ENCODE measurements at regions of chr2 and their contacts with region 1.

Region 1: DNA sequence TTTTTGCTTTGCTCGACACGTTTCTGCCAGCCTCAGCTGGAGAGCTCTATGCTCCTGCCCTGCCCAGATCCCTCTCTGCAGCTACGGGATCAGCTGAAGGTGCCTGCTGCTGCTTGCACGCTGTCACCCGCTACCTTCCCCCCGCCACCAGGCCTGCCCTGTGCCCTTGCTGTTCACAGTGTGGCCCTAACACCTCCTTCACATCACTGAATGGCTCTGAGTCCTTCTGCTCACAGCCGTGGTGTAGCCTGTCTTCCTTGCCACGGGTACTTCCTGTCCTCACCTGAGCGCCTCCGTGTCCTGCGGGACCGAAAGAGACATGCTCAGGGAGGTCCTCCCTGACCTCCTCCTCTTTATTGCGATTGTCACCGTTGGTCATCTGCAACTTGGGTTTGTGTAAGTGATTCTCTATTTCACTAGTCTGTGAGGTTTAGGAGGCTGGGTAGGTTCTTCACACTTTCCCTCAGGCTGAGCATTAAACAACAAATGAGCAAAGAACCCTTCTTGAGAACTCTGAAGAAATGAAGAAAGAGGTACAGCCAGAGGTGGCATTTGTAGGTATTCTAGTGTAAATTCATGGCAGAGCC is 127.5 kb downstream of the NCK2 start:
- DNase-seq: no peak
- ATAC-seq: no peak; the same call in 2 of the 3 replicates
- H3K4me3 ChIP-seq: no peak overlapping the region
- H3K27ac ChIP-seq: no peak overlapping the region
- H3K4me1 ChIP-seq: peaks cover 28% of the 10 kb centered on the region
- H3K27me3 ChIP-seq: no peaks in the 10 kb centered on the region
- CTCF ChIP-seq: no peak
- EP300 ChIP-seq: no peak
- POLR2A ChIP-seq: no peak
- RAD21 ChIP-seq: no peak

Region 2: GRCh38 chr2:105744091-105744908 is 127.9 kb before region 1 on chr2:
- CTCF ChIA-PET with region 1: no interaction called
- POLR2A ChIA-PET with region 1: no interaction called
- in situ Hi-C with region 1: no loop called
- intact Hi-C with region 1: loop called (anchors 5 kb)
- DNase-seq: peak; percentile 19
- ATAC-seq: peak; percentile 76
- H3K4me3 ChIP-seq: peak overlapping the region; percentile 63 to 83 (median 72)
- H3K27ac ChIP-seq: no peak overlapping the region
- H3K4me1 ChIP-seq: peaks cover 38% of the 10 kb centered on the region
- H3K27me3 ChIP-seq: peaks cover 0 to 22% of the 10 kb centered on the region in 2 experiments; a peak in 3 of 5 replicates
- CTCF ChIP-seq: peak; percentile 3; the same call in 1 of the 2 replicates
- EP300 ChIP-seq: no peak
- POLR2A ChIP-seq: no peak
- RAD21 ChIP-seq: no peak

Region 3: DNA sequence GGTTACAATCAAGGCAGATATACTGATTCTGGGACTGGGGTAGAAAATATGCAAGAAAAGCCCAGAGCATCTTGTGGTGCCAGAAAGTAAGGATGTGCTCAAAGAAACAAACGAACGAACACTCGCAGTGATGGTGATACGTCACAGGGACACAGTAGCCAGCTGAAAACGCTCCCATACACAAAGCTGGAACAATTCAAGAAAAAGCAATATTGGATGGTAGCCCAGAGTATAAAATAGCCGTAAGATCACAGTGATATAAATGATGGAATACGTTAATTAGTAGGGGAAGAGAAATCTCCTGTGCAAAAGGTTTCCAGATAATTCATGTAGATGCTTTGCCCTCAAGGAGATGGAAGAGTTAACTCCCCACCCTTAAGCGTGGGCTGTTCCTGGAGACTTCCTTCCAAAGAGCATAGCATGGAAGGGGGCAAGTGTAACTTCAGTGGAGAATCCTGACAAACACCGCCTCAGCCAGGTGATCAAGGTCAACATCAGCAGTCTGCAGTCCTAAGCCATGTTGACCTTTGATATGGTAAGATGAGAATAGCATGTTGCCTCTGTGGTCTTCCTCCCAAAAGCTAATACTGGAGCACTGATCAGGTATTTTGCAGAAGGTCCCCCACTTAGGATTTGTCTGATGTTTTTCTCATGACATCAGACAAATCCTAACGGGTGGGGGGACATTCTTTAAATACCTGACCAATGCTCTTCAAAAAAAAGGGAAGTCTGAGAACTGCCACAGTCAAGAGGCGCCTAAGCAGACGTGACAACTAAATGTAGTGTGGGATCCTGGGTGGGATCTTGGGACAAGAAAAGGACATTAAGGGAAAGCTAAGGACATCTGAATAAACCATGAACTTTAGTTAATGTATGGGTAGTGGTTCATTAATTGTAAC is 28.5 kb before region 1 on chr2:
- CTCF ChIA-PET with region 1: no interaction called
- POLR2A ChIA-PET with region 1: no interaction called
- in situ Hi-C with region 1: no loop called
- intact Hi-C with region 1: loop called (anchors 1 kb)
- DNase-seq: peak; percentile 46
- ATAC-seq: peak; percentile 69
- H3K4me3 ChIP-seq: no peak overlapping the region
- H3K27ac ChIP-seq: no peak overlapping the region
- H3K4me1 ChIP-seq: peaks cover 23% of the 10 kb centered on the region
- H3K27me3 ChIP-seq: no peaks in the 10 kb centered on the region
- CTCF ChIP-seq: 0 out of 2 replicates have a peak, but pooled peaks have one; percentile 4
- EP300 ChIP-seq: no peak
- POLR2A ChIP-seq: no peak
- RAD21 ChIP-seq: no peak